CD8-positive, alpha-beta T cell (primary cell): ENCODE measurements at regions of chr9 and their contacts with region 1.

Region 1: GRCh38 chr9:124771021-124771866 is at the start of gene NR6A1:
- DNase-seq: peak; percentile 86 to 97 (median 92)
- ATAC-seq: peak; percentile 90
- H3K4me3 ChIP-seq: peak within 1 kb of the TSS; percentile 59 to 67
- H3K4me3 Mint-ChIP-seq: peak within 1 kb of the TSS; percentile 89
- H3K27ac ChIP-seq: peak within 1 kb of the TSS in 1 of 2 experiments; percentile 58
- H3K27ac Mint-ChIP-seq: peak within 1 kb of the TSS; percentile 82
- H3K4me1 ChIP-seq: peaks cover 21% of the 10 kb centered on the region
- H3K4me1 Mint-ChIP-seq: peaks cover 39% of the 10 kb centered on the region
- H3K27me3 ChIP-seq: peaks cover 24 to 43% of the 10 kb centered on the region in 2 experiments
- H3K27me3 Mint-ChIP-seq: peaks cover 73% of the 10 kb centered on the region
- CTCF ChIP-seq: no peak
- total RNA-seq, gene NR6A1: not detected

Region 2: DNA sequence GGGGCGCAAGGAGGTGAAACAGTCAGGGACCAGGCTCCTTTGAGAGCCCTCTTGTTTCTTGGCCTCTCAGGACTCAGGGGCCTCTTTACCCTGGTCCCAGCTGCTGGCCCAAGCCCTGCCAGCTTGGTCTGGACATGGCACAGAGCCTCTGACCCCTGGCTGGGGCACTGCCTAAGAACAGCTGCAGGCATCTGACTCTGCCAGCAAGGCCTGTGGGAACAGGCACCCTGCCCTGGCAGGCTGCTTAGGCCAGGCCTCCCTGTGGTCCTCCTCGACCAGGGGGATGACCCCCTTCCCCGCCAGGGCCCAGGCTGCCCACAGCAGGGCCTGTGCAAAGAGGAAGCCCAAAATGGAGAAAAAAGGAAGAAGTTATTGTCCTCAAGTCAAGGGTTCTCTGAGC is 31.2 kb after region 1 on chr9:
- CTCF ChIA-PET with region 1: no interaction called
- POLR2A ChIA-PET with region 1: no interaction called
- intact Hi-C with region 1: no loop called
- DNase-seq: no peak
- ATAC-seq: no peak
- H3K4me3 ChIP-seq: no peak overlapping the region
- H3K4me3 Mint-ChIP-seq: no peak overlapping the region
- H3K27ac ChIP-seq: no peak overlapping the region
- H3K27ac Mint-ChIP-seq: no peak overlapping the region
- H3K4me1 ChIP-seq: no peaks in the 10 kb centered on the region
- H3K4me1 Mint-ChIP-seq: no peaks in the 10 kb centered on the region
- H3K27me3 ChIP-seq: peaks cover 0 to 10% of the 10 kb centered on the region in 2 experiments
- H3K27me3 Mint-ChIP-seq: peaks cover 4% of the 10 kb centered on the region
- CTCF ChIP-seq: no peak

Region 3: DNA sequence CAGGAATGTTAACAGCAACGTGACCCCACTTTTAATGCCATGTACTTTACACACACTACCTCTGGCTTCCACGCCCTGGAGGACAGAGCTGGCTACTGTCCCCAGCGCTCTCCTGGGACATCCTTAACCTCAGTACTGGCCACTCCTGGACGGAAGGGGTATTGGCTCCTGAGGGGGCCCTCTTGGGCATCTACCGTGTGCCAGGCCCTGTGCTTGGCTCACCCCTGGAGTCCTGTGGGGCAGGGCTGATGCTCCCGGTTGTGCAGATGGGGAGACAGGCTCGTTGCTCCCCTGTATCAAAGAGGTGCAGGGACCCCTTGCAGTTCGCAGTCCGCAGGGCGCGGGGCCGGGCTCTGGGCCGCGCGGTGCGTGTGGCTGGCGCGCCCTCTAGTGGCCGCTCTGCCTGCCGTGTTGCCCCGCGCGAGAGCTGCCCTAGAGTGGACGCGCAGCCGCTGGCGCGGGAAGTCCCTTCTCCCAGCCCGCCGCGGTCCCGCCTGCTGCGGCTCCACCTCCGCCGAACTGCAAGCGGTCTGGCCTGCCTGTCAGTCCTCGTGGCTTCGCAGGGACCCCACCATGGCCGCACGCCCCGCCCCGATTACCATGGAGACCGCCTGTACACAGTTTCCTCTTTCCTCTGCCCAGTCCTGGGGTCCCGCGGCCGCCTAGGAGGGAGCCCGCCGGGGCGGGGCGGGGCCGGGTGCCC is 81.7 kb after region 1 on chr9 and contains the start of gene WDR38:
- CTCF ChIA-PET with region 1: interaction called, 245 read pairs
- POLR2A ChIA-PET with region 1: interaction called, 5 read pairs
- intact Hi-C with region 1: loop called (anchors 1 kb)
- DNase-seq: peak; percentile 64 to 95 (median 80)
- ATAC-seq: peak; percentile 83
- H3K4me3 ChIP-seq: peak within 1 kb of the TSS; percentile 37 to 44
- H3K4me3 Mint-ChIP-seq: peak within 1 kb of the TSS; percentile 65
- H3K27ac ChIP-seq: peak within 1 kb of the TSS in 1 of 2 experiments; percentile 73
- H3K27ac Mint-ChIP-seq: peak within 1 kb of the TSS; percentile 64
- H3K4me1 ChIP-seq: peaks cover 12% of the 10 kb centered on the region
- H3K4me1 Mint-ChIP-seq: peaks cover 9% of the 10 kb centered on the region
- H3K27me3 ChIP-seq: no peaks in the 10 kb centered on the region
- H3K27me3 Mint-ChIP-seq: peaks cover 9% of the 10 kb centered on the region
- CTCF ChIP-seq: peak; percentile 98
- total RNA-seq, gene WDR38: not detected

Region 4: GRCh38 chr9:124868511-124869465 is 97.5 kb after region 1 on chr9:
- CTCF ChIA-PET with region 1: interaction called, 3 read pairs
- POLR2A ChIA-PET with region 1: interaction called, 3 read pairs
- intact Hi-C with region 1: loop called in 1 of 2 experiments (anchors 1 kb)
- DNase-seq: peak; percentile 82 to 94 (median 88)
- ATAC-seq: peak; percentile 66
- H3K4me3 ChIP-seq: peak overlapping the region; percentile 76 to 79
- H3K4me3 Mint-ChIP-seq: peak overlapping the region; percentile 95
- H3K27ac ChIP-seq: peak overlapping the region; percentile 81 to 94
- H3K27ac Mint-ChIP-seq: peak overlapping the region; percentile 97
- H3K4me1 ChIP-seq: peaks cover 42% of the 10 kb centered on the region
- H3K4me1 Mint-ChIP-seq: peaks cover 51% of the 10 kb centered on the region
- H3K27me3 ChIP-seq: no peaks in the 10 kb centered on the region
- H3K27me3 Mint-ChIP-seq: no peaks in the 10 kb centered on the region
- CTCF ChIP-seq: no peak

Region 5: GRCh38 chr9:125126019-125126746 is 354.9 kb after region 1 on chr9:
- CTCF ChIA-PET with region 1: interaction called, 3 read pairs
- POLR2A ChIA-PET with region 1: no interaction called
- intact Hi-C with region 1: loop called in 1 of 2 experiments (anchors 10 kb)
- DNase-seq: peak; percentile 65 to 95 (median 82)
- ATAC-seq: peak; percentile 99
- H3K4me3 ChIP-seq: no peak overlapping the region
- H3K4me3 Mint-ChIP-seq: peak overlapping the region; percentile 61
- H3K27ac ChIP-seq: peak overlapping the region in 1 of 2 experiments; percentile 42
- H3K27ac Mint-ChIP-seq: peak overlapping the region; percentile 91
- H3K4me1 ChIP-seq: peaks cover 23% of the 10 kb centered on the region
- H3K4me1 Mint-ChIP-seq: peaks cover 36% of the 10 kb centered on the region
- H3K27me3 ChIP-seq: no peaks in the 10 kb centered on the region
- H3K27me3 Mint-ChIP-seq: no peaks in the 10 kb centered on the region
- CTCF ChIP-seq: no peak

Region 6: DNA sequence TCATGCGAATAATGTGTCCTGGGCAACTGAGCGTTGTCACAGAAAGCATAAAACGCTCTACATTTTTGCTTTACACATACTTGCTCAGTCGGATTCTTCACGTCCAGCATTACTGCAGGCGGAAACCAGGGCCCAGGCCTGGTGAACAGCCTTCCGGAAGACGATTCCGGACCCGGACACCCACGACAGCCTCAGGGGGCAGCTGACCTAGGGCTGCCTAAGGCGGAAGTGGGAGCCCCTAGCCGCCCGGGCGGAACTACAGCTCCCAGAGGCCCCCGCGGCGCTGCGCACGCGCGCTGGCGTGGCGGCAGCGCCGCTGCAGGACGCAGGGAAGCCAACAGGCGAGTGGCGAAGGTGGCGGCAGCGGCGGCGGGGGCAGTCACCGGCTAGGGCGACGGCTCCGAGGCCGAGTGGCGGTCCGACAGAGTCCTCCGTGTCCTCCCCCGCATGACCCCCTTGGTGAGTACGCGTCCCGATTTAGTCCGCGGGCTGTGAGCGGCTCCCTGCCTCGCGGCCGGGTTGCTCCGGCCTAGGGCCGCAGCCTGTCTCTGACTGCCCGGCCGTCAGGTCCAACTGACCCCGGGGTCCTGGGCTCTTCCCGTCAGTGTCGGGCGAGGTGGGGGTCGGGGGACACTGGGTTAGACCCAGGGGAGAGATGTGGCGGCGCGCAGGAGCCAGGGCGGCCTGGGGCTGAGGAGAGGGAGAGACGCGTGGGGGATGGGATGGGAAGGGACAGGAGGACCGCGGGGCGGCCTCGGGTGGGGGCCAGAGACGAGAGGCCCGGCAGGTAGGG is 490.5 kb after region 1 on chr9 and contains the start of gene GAPVD1:
- CTCF ChIA-PET with region 1: interaction called, 3 read pairs
- POLR2A ChIA-PET with region 1: no interaction called
- intact Hi-C with region 1: loop called in 1 of 2 experiments (anchors 5 kb)
- DNase-seq: peak; percentile 72 to 94 (median 86)
- ATAC-seq: peak; percentile 92
- H3K4me3 ChIP-seq: peak within 1 kb of the TSS; percentile 90 to 99
- H3K4me3 Mint-ChIP-seq: peak within 1 kb of the TSS; percentile 98
- H3K27ac ChIP-seq: peak within 1 kb of the TSS; percentile 67 to 78
- H3K27ac Mint-ChIP-seq: peak within 1 kb of the TSS; percentile 94
- H3K4me1 ChIP-seq: peaks cover 29% of the 10 kb centered on the region
- H3K4me1 Mint-ChIP-seq: peaks cover 49% of the 10 kb centered on the region
- H3K27me3 ChIP-seq: no peaks in the 10 kb centered on the region
- H3K27me3 Mint-ChIP-seq: peaks cover 2% of the 10 kb centered on the region
- CTCF ChIP-seq: peak; percentile 54
- total RNA-seq, gene GAPVD1: 81.0 to 84.1 TPM